ENCODE measurements at regions of chr16 and their contacts with region 1.

Region 1: DNA sequence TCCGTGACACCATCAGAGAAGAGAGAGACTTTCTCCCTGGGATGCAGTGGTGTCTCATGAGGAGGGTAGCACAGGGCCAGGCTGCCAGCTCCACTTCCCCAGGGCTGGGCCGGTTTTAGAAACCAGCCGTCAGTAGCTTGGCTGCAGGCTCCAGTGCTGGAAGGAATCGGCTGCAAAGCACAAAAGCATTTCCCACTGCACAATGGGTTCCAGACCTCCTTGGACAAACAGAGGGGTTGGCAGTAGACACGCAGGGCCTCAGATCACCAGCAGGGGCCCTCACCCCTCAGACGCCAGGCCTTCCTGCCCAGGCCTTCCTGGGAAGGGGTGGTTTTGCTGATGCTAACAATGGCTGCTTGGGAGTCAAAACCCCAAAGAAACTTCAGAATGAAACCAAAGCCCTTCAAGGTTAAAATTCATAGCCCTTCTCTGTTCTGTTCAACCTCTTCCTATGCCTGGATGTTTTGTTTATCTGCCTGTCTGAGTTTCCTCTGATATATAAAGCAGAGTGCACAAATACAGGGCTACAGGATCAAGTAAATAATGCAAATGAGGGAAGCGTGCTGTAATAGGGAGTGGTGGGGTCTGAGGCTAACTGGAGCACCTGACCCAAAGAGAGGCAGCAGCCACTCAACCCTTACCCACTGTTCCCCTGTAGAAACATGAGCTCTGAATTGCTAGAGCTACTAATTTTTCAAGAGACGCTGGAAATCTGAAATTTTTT is 26.2 kb downstream of the TEKT5 start:
- DNase-seq: peak; percentile 45 to 54
- ATAC-seq: peak; percentile 90 to 97
- H3K4me3 ChIP-seq: no peak overlapping the region
- H3K27ac ChIP-seq: no peak overlapping the region
- H3K4me1 ChIP-seq: no peaks in the 10 kb centered on the region
- CTCF ChIP-seq: no peak; the same call in 2 of the 3 replicates
- EP300 ChIP-seq: no peak
- POLR2A ChIP-seq: no peak
- RAD21 ChIP-seq: no peak

Region 2: DNA sequence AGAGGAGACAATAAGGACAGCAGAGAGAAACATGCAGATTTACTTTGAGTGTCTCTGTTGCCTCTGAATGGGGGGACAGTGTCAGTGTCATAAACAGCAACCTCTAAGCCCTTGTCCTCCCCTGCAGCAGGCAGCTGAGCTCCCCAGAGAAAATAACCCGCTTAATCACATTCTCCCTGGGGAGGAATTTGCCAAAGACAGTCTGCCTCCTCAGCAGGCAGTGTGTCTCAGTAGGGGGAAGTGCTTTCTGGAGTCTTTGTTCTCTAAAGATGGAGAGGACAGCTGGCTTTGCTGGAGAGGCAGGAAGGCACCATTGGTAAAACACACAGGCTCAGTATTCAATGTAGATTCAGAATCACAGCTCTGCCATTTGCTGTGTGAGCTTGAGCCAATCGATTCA is 10.2 kb after region 1 on chr16:
- CTCF ChIA-PET with region 1: interaction called, 11 read pairs
- POLR2A ChIA-PET with region 1: no interaction called
- DNase-seq: no peak
- ATAC-seq: no peak
- H3K4me3 ChIP-seq: no peak overlapping the region
- H3K27ac ChIP-seq: no peak overlapping the region
- H3K4me1 ChIP-seq: no peaks in the 10 kb centered on the region
- CTCF ChIP-seq: no peak
- EP300 ChIP-seq: no peak
- POLR2A ChIP-seq: no peak
- RAD21 ChIP-seq: no peak